Mucosa of descending colon (tissue), 3 donors: ENCODE measurements at regions of chr1 and their contacts with region 1.

Region 1: DNA sequence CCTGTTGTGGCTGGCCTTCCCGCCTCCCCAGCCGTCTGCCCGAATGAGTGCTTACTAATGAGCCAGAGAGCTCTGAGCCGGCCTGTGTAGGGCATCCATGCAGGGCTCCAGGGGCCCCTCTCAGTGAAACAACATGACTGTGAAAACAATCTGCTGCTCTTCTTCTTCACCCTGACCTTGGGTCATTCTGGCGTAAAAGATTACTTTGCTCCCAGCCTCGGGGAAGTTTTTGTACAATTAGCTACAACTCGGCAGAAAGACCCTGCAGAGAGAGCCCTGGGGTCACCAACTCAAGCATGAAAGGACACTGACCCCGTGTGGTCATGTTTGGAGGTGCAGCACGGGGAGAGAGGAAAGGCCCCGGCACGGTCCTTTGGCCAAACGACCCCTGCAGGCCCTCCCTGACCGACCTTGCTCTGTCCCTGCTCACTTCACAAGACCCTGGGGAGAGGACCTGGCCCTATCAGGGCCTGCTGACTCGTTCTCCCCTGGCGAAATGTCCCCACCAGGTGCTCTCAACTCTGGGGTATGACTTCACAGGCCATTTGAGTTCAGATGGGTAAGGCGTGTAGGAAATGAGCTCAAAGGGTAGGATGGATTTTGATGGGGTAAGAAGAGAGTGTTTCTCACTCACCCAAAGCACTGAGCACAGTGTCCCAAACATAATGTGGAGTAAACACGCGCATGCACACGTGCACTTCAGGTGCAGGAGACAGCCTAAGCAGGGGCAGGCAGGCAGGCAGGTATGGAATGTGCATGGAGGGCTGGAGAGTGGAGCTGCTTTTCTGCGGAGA is 22.9 kb upstream of the FAM20B start:
- DNase-seq: peak; percentile 68 to 92 (median 85)
- ATAC-seq: peak; percentile 82
- H3K4me3 ChIP-seq: no peak overlapping the region
- H3K4me1 ChIP-seq: no peaks in the 10 kb centered on the region
- CTCF ChIP-seq: peak; percentile 94

Region 2: DNA sequence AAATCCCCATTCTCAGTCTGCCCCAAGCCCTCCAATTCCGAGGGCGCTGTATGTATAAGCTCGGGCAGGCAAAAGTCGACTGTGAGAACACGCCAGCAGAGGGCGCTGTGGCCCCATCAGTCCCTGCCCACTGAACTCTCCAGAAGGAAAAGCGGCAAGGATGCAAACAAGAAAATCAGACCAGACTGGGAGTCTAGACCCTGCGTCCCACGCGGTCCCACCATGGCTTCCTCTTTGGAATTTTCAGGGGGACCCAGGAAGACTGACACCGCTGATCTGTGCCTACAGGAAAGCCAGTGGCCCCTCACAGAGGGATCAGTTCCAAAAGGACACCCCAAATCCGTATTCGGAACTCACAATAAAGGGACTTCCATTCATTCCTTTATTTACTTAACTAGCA is 470.4 kb before region 1 on chr1:
- intact Hi-C with region 1: loop called (anchors 10 kb)
- DNase-seq: peak; percentile 82 to 95 (median 91)
- ATAC-seq: peak; percentile 78
- H3K4me3 ChIP-seq: no peak overlapping the region
- H3K4me1 ChIP-seq: peaks cover 18% of the 10 kb centered on the region
- CTCF ChIP-seq: peak; percentile 83

Region 3: DNA sequence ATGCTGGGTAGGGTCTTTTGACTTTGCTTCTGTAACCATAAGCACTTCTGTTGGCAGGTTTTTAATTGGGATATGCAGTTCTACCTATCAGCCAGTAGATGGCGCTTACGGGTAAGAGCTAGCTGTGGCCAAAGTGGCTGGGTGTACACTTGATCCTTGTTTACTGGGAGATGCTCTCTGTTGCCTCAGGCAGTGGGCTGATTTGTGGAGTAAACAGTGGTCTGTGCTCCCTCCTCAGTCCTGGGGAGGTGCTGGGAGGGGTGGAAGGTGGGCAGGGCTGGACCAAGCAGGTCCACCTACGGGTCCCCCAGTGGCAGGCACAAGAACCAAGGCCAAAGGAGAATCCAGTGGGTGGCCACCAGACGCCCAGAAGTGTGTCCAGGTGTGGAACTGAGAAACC is 234.3 kb before region 1 on chr1:
- intact Hi-C with region 1: loop called (anchors 5 to 10 kb)
- DNase-seq: no peak
- ATAC-seq: peak; percentile 64
- H3K4me3 ChIP-seq: no peak overlapping the region
- H3K4me1 ChIP-seq: no peaks in the 10 kb centered on the region
- CTCF ChIP-seq: peak; percentile 36

Region 4: GRCh38 chr1:178774263-178774662 is 228.5 kb before region 1 on chr1:
- intact Hi-C with region 1: loop called (anchors 5 to 10 kb)
- DNase-seq: no peak
- ATAC-seq: no peak
- H3K4me3 ChIP-seq: no peak overlapping the region
- H3K4me1 ChIP-seq: no peaks in the 10 kb centered on the region
- CTCF ChIP-seq: no peak

Region 5: DNA sequence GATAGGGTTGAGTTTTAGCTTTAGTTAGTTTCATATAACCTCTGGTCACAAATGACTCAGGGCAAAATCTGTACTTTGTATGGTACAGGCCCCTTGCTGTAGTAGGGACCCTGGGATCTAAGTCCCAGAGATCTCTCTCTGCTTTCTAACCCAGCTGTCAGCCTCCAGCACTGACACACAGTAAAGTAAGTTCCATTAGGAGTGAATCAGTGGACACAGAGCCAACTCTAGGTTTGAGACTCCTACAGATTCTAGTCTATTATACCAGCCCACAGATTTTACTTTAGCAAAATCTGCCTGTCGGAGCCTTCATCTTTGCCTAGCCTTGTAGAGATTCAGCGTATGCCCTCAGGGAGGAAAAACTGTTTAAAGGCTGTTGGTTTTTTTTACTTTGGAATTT is 184.3 kb before region 1 on chr1:
- intact Hi-C with region 1: loop called in 1 of 2 experiments (anchors 10 kb)
- DNase-seq: no peak
- ATAC-seq: no peak
- H3K4me3 ChIP-seq: no peak overlapping the region
- H3K4me1 ChIP-seq: no peaks in the 10 kb centered on the region
- CTCF ChIP-seq: no peak

Region 6: GRCh38 chr1:179121159-179121938 is 118.6 kb after region 1 on chr1:
- intact Hi-C with region 1: no loop called
- DNase-seq: peak in 1 of 3 donors; percentile 83
- ATAC-seq: peak; percentile 58
- H3K4me3 ChIP-seq: no peak overlapping the region
- H3K4me1 ChIP-seq: peaks cover 7% of the 10 kb centered on the region
- CTCF ChIP-seq: no peak